Upper lobe of right lung (tissue), 1 donor: ENCODE measurements at regions of chr7 and their contacts with region 1.

Region 1: GRCh38 chr7:138014686-138015085 is 12.8 kb upstream of the CREB3L2 start:
- DNase-seq: no peak
- ATAC-seq: no peak
- H3K4me3 ChIP-seq: no peak overlapping the region
- H3K27ac ChIP-seq: no peak overlapping the region
- H3K4me1 ChIP-seq: no peaks in the 10 kb centered on the region
- H3K27me3 ChIP-seq: no peaks in the 10 kb centered on the region
- CTCF ChIP-seq: no peak

Region 2: GRCh38 chr7:137903382-137904169 is 111.1 kb before region 1 on chr7:
- intact Hi-C with region 1: loop called (anchors 5 kb)
- DNase-seq: no peak
- ATAC-seq: peak; percentile 87
- H3K4me3 ChIP-seq: no peak overlapping the region
- H3K27ac ChIP-seq: no peak overlapping the region
- H3K4me1 ChIP-seq: peaks cover 11% of the 10 kb centered on the region
- H3K27me3 ChIP-seq: no peaks in the 10 kb centered on the region
- CTCF ChIP-seq: peak; percentile 80